Head of caudate nucleus (tissue), 42 donors: ENCODE measurements at regions of chr9 and their contacts with region 1.

Region 1: GRCh38 chr9:127503947-127504782 is 52.9 kb downstream of the LRSAM1 start:
- DNase-seq: peak; percentile 57 to 93 (median 84)

Region 2: DNA sequence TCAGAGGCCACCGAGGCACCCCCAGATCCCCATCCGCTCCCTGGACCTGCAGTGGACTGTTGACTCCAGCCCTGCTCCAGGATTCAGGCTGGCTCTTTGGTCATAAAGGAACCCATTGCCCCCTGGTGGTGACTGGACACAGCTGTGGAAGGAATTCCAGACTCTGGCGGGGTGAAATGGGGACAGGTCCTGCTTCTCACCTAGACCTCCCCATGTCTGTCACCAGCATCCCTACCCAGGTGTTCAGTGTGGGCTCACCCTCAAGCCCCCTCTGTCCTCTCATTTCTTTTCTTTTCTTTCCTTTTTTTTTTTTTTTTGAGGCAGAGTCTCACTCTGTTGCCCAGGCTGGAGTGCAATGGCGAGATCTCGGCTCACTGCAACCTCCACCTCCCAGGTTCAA is 82.4 kb after region 1 on chr9:
- intact Hi-C with region 1: loop called (anchors 5 kb)
- DNase-seq: peak; percentile 46 to 93 (median 80)